Posterior cingulate gyrus (tissue), 11 donors: ENCODE measurements at regions of chr12 and their contacts with region 1.

Region 1: GRCh38 chr12:57124259-57124877 is 3.9 kb upstream of the LRP1 start:
- DNase-seq: peak in 9 of 10 donors; percentile 48 to 94 (median 80)

Region 2: GRCh38 chr12:57151741-57152630 is 27.6 kb after region 1 on chr12:
- intact Hi-C with region 1: no loop called
- DNase-seq: peak in 4 of 10 donors; percentile 62 to 91 (median 84)

Region 3: DNA sequence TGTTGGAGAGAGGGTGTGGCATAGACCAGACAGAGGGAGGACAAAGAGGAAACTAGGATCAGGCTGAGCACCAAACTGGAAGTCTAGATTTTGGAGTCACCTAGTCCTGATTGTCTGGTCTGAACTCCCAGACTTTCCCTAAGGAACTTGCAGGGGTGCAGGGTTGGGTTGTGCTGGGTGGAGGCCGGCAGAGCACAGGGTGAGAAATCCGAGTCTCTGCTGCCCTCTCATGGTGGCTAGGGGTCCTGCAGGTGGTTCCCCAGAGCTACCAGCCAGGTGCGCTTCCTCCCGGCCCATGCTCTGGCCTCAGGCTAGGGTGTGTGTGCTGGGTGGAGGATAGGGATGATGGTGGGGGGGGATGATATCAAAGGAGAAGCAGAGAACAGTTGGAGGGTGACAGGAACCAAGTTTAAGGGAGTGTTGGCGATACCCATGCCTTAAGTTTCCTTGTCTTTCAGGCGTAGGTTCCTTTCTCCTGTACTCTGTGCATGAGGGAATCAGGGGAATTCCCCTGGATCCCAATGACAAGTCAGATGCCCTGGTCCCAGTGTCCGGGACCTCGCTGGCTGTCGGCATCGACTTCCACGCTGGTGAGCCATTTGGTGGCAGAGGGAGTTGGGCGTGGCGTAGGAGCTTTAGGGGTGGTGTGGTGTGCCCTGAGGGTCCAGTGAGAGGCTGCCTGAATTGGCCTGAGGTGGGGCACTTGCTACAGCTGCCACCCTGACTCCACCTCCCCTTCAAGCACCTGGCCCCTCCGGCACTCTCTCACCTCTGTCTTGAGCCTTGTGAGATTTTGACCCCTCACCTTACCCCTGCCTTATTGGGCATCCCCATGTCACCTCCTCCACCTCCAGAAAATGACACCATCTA is 58.8 kb after region 1 on chr12:
- intact Hi-C with region 1: loop called (anchors 1 kb)
- DNase-seq: peak in 9 of 10 donors; percentile 50 to 94 (median 72)

Region 4: DNA sequence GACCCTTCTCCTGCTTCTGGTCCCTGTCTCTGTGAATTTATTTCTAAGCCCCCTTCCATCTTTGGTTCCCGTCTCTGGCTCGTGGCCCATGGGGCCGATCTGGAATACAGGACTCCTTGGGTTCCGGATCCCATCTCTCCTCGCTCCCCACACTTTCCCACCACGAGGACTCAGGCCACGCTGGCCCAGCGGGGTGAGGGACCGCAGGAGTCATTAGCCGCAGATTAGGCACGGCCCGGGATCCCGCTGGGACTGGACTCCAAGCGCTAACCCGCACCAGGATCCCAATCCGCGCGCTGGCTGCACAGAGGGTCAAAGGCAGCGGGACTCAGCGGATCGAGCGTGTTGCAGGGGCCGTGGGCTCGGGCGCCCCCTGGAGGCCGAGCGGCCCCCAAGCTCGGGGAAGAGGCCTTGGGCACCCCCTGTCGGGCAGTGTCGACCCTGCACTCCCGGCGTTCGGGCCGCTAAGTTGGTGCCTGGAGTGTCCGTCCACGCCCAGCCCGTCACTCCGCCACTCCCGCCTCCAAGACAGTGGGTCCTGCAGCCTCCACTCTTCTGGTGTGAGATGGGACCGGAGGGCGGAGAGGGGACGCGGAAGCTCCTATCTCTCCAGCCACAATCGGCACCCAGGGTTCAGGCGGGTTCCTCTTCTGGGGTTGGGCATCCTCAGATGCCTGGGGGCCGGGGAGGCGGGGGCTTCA is 114.6 kb after region 1 on chr12:
- intact Hi-C with region 1: loop called (anchors 5 kb)
- DNase-seq: peak; percentile 79 to 98 (median 88)